SK-N-SH (cell line): ENCODE measurements at regions of chr16 and their contacts with region 1.

Region 1: GRCh38 chr16:56789360-56789759 is 59.4 kb downstream of the NUP93 start:
- DNase-seq: peak; percentile 42
- H3K4me3 ChIP-seq: no peak overlapping the region
- H3K27ac ChIP-seq: no peak overlapping the region
- H3K4me1 ChIP-seq: peaks cover 5 to 21% of the 10 kb centered on the region in 2 experiments; a peak in 3 of 4 replicates
- H3K27me3 ChIP-seq: no peaks in the 10 kb centered on the region
- CTCF ChIP-seq: peak; percentile 56
- EP300 ChIP-seq: no peak
- RAD21 ChIP-seq: peak; percentile 83

Region 2: GRCh38 chr16:56558024-56558747 is 231.2 kb before region 1 on chr16:
- CTCF ChIA-PET with region 1: no interaction called
- POLR2A ChIA-PET with region 1: no interaction called
- DNase-seq: peak; percentile 47
- H3K4me3 ChIP-seq: peak overlapping the region in 1 of 2 experiments; percentile 41; a peak in 1 of 4 replicates
- H3K27ac ChIP-seq: peak overlapping the region in 1 of 2 experiments; percentile 46; a peak in 2 of 4 replicates
- H3K4me1 ChIP-seq: peaks cover 5 to 6% of the 10 kb centered on the region in 2 experiments; a peak in 3 of 4 replicates
- H3K27me3 ChIP-seq: no peaks in the 10 kb centered on the region
- CTCF ChIP-seq: no peak
- EP300 ChIP-seq: peak in 1 of 2 experiments; percentile 53; a peak in 1 of 4 replicates
- RAD21 ChIP-seq: no peak

Region 3: GRCh38 chr16:56773532-56773931 is 15.8 kb before region 1 on chr16:
- CTCF ChIA-PET with region 1: interaction called, 24 read pairs
- POLR2A ChIA-PET with region 1: no interaction called
- DNase-seq: no peak
- H3K4me3 ChIP-seq: no peak overlapping the region
- H3K27ac ChIP-seq: no peak overlapping the region
- H3K4me1 ChIP-seq: peaks cover 5 to 8% of the 10 kb centered on the region in 2 experiments; a peak in 3 of 4 replicates
- H3K27me3 ChIP-seq: no peaks in the 10 kb centered on the region
- CTCF ChIP-seq: no peak
- EP300 ChIP-seq: no peak
- RAD21 ChIP-seq: no peak

Region 4: GRCh38 chr16:56800355-56800754 is 11.0 kb after region 1 on chr16:
- CTCF ChIA-PET with region 1: interaction called, 55 read pairs
- POLR2A ChIA-PET with region 1: no interaction called
- DNase-seq: no peak
- H3K4me3 ChIP-seq: no peak overlapping the region
- H3K27ac ChIP-seq: no peak overlapping the region
- H3K4me1 ChIP-seq: no peaks in the 10 kb centered on the region
- H3K27me3 ChIP-seq: no peaks in the 10 kb centered on the region
- CTCF ChIP-seq: no peak
- EP300 ChIP-seq: no peak
- RAD21 ChIP-seq: no peak

Region 5: DNA sequence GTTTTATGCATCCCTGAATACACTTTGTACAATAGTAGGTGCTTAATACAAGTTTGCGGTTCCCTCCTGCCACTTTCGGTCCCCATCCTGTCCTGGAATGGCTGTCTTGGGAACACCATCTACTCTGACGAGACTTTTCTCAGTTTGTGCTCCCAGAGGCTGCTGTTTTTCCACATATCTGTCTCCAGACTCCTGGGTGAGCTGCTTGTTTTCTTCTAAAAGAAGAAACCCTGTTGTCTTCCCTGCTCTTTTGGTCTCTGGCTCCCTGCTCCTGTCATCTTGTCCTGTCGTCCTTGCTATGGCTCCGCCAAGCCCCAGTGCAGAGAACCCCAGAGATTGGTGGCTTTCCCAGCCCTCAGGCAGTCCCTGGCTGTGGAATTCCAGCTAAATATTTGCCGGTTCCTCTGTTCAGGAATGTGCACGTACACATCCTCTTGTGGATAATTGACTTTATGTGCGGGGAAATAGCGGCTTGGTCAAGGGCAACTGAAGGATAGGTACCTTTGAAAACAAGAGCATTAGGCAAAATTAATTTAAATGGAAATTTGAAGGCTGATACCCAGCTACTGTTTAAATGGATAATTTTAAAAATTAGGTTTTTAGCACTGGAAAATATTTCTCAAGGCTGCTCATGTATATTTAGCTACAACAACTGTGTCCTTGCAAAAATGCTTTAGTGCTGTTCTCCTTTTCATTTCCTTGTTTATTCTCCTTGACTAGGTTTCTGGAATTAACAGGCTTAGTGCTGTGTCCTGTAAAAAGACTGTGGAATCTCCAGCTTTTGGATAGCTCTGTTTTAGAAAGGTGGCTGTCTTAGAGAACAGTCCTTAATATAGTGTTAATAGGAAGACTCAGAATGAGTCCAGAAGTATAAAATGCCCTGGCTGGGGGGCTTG is 25.4 kb after region 1 on chr16:
- CTCF ChIA-PET with region 1: interaction called, 12 read pairs
- POLR2A ChIA-PET with region 1: no interaction called
- DNase-seq: no peak
- H3K4me3 ChIP-seq: no peak overlapping the region
- H3K27ac ChIP-seq: no peak overlapping the region
- H3K4me1 ChIP-seq: peaks cover 2 to 18% of the 10 kb centered on the region in 2 experiments; a peak in 3 of 4 replicates
- H3K27me3 ChIP-seq: no peaks in the 10 kb centered on the region
- CTCF ChIP-seq: no peak
- EP300 ChIP-seq: no peak
- RAD21 ChIP-seq: no peak

Region 6: DNA sequence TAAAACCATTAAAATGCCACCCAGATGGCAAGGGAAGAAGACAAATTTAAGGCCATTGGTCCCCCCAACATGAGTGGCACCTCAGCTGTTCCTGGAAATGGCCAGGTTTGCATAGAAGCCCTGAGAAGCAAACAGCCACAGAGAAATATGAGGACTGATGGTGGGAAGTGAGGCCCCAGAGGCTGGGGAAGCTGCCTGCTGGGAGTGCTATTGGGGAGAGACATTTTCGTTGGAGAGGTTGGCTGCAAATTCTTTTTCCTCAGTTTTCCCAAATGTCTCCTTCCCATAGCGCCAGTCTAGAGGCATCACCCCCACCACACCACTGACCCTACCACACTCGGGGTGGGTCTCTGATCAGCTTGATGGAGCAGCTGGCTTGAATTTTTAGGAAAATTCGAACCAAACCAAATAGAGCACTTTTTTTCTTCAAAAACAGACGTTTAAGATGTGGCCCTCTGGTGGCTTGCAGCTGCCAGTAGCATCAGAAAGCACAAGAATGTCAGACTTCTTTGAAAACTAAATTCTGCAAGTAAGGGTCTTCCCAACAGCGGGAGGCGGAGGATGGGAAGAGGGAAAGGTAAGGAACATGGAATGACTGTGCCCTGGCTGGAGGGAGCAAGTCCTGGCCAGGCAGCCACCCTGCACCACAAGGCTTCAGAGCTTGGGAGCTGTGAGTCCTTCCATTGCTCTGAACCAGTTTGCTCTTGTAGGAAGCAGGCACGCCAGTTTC is 62.5 kb after region 1 on chr16:
- CTCF ChIA-PET with region 1: interaction called, 14 read pairs
- POLR2A ChIA-PET with region 1: no interaction called
- DNase-seq: no peak
- H3K4me3 ChIP-seq: no peak overlapping the region
- H3K27ac ChIP-seq: peak overlapping the region in 1 of 2 experiments; percentile 85; a peak in 2 of 4 replicates
- H3K4me1 ChIP-seq: peaks cover 36 to 46% of the 10 kb centered on the region in 2 experiments
- H3K27me3 ChIP-seq: no peaks in the 10 kb centered on the region
- CTCF ChIP-seq: peak; percentile 64
- EP300 ChIP-seq: no peak
- RAD21 ChIP-seq: peak; percentile 31

Region 7: GRCh38 chr16:56950881-56951771 is 161.8 kb after region 1 on chr16:
- CTCF ChIA-PET with region 1: interaction called, 23 read pairs
- POLR2A ChIA-PET with region 1: interaction called, 4 read pairs
- DNase-seq: peak; percentile 82
- H3K4me3 ChIP-seq: no peak overlapping the region
- H3K27ac ChIP-seq: no peak overlapping the region
- H3K4me1 ChIP-seq: no peaks in the 10 kb centered on the region; a peak in 1 of 4 replicates
- H3K27me3 ChIP-seq: no peaks in the 10 kb centered on the region
- CTCF ChIP-seq: peak; percentile 65
- EP300 ChIP-seq: no peak
- RAD21 ChIP-seq: peak; percentile 82